Cardiac septum (tissue), 1 donor: ENCODE measurements at regions of chr2 and their contacts with region 1.

Region 1: GRCh38 chr2:100562732-100563720 is at the start of gene PDCL3:
- DNase-seq: peak; percentile 98
- total RNA-seq, gene PDCL3: 26.7 TPM

Region 2: DNA sequence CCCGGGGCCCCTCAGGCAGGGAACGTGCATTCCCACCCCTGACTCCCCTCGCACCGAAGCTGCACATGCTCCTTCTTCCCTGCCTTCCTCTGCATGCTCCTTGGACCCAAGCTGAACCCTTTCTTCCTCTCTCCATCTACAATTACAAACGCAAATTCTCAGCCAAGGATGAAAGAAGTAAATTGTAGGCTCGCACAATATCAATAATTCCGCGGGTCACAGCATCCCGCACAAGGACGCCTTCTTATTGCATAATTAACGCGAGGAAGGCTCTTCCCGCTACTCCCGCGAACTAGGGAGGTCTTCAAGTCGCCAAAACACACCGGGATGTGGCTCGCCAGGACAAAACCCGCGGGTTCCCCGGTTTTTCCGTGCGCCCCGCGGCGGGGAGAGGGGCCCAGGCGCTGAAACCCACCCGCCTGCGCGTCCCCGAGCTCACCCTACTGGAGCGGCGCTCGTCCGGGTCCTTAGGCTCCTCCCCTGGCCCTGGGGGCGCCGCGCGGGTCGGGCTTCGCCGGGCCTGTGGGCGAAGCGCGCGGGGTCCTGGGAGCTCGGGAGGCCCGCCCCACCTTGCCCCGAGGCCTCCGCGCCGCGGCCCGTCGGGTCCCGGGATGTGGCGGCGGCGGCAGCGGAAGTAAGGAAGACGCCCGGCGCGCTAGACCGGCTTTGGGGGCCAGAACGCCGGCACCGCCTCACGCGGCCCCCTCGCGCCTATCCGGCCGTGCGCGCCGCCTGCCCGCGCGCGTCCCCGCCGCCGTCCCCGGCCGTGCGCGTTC is 145.9 kb before region 1 on chr2 and contains the start of gene CHST10:
- intact Hi-C with region 1: loop called (anchors 5 kb)
- DNase-seq: peak; percentile 79
- total RNA-seq, gene CHST10: 7.8 TPM

Region 3: DNA sequence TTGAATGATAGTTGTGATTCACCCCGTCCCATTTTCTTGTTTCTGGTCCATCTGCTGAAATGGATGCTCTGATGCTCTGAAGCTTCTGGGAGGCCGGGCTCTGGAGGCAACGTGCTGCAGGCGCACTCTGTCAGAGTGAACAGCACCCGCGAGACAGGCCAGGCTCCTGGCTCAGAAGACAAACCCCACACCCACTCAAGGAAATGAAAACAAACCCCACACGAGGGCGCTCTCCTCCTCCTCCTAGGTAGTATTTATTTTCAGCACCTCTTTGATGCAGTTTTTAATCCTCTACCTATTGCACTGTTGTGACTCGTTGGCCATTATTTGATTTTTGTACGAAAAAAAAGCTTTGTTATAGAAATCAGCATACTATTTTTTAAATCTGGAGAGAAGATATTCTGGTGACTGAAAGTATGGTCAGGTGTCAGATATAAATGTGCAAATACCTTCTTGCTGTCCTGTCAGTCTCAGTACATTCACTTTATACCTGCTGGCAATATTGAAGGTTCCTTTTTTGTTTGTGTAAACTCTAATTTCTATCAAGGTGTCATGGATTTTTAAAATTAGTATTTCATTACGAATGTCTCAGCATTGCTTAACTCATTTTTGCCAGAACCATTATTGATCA is 135.3 kb before region 1 on chr2:
- intact Hi-C with region 1: no loop called
- DNase-seq: no peak

Region 4: GRCh38 chr2:100802066-100802465 is 239.0 kb after region 1 on chr2:
- intact Hi-C with region 1: no loop called
- DNase-seq: no peak